ENCODE measurements at regions of chr4 and their contacts with region 1.

Region 1: GRCh38 chr4:173505924-173506518 is 24.0 kb downstream of the HAND2 start:
- DNase-seq: peak in 1 of 5 donors; percentile 42
- H3K4me3 ChIP-seq: no peak overlapping the region
- H3K4me3 Mint-ChIP-seq: peak overlapping the region in 2 of 8 donors; percentile 8 to 58
- H3K27ac ChIP-seq: no peak overlapping the region
- H3K27ac Mint-ChIP-seq: no peak overlapping the region
- H3K4me1 ChIP-seq: peaks cover 32% of the 10 kb centered on the region
- H3K4me1 Mint-ChIP-seq: peaks cover 4 to 34% (median 23%) of the 10 kb centered on the region in 4 donors
- H3K27me3 ChIP-seq: peaks cover 49% of the 10 kb centered on the region
- H3K27me3 Mint-ChIP-seq: peaks cover 63 to 80% of the 10 kb centered on the region in 2 donors

Region 2: DNA sequence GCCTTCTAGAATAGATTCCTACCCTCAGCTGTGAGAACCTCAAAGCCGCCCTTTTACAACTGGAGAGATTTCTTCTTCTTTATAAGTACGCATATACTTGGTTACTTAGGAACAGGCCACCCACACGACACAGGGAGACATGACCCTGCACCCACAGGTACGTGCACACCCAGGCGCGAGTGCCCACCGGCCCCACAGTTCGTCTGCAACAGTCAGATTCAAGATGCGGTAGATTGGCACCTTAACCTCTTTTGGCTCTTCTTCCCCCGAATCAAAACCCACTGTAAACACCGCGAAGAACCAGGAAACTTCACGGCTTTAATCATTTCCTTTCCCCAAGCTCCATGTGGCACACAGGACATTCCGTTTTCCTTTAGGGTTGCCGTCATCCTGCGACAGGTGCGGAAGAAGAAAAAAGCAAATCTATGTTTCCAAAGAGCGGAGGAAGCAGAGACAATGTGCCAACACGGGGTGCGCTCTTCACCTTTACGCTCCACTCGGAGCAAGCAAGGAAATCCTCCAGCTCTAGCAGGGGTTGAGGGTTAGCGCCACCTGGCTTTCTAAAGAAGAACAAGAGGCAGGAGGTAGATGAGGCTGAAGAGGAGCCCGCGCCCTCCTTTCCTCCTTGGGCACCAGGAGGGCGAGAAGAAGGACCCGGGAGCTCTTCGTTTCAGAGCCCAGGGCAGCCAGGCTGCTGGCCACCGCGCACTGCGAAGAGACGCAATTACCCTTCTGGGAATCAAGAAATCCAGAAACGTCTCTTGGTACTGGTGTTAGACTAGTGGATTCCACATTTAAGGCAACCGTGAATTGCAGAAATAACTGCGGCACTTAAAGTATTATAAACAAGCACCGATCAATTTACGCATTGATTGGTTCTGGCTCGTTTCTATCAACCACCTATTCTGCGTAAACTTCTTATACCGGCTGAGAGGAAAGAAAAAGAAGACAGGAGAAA is 11.7 kb before region 1 on chr4:
- CTCF ChIA-PET with region 1: interaction called, 10 read pairs
- POLR2A ChIA-PET with region 1: no interaction called
- intact Hi-C with region 1: no loop called
- DNase-seq: peak; percentile 60 to 71 (median 66)
- H3K4me3 ChIP-seq: peak overlapping the region; percentile 46 to 54
- H3K4me3 Mint-ChIP-seq: peak overlapping the region; percentile 85 to 94 (median 88)
- H3K27ac ChIP-seq: no peak overlapping the region
- H3K27ac Mint-ChIP-seq: peak overlapping the region in 3 of 7 donors; percentile 19 to 66 (median 32)
- H3K4me1 ChIP-seq: peaks cover 11% of the 10 kb centered on the region
- H3K4me1 Mint-ChIP-seq: peaks cover 11 to 28% (median 18%) of the 10 kb centered on the region in 4 donors
- H3K27me3 ChIP-seq: no peaks in the 10 kb centered on the region
- H3K27me3 Mint-ChIP-seq: peaks cover 15 to 19% of the 10 kb centered on the region in 2 donors

Region 3: DNA sequence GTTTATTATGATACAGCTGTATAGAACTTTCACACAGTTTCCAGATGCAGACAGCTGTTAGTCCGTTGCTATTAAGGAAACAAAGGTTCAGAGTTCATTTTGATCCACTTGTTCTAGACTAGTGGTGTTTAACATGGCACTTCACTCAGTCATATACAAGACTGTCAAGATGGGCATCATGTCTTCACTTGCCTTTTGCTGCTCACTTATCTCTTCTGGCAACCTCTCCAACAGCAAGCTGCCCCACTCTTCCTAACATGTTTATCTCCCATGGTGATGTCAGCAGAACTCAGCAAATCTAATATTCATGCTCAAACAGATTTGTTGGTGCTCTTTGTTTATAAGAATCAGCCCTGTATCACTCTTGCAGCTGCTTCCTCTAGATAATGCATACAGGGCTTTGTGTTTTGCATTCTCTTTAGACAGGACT is 260.2 kb after region 1 on chr4:
- CTCF ChIA-PET with region 1: no interaction called
- POLR2A ChIA-PET with region 1: no interaction called
- intact Hi-C with region 1: no loop called
- DNase-seq: no peak
- H3K4me3 ChIP-seq: no peak overlapping the region
- H3K4me3 Mint-ChIP-seq: no peak overlapping the region
- H3K27ac ChIP-seq: no peak overlapping the region
- H3K27ac Mint-ChIP-seq: no peak overlapping the region
- H3K4me1 ChIP-seq: no peaks in the 10 kb centered on the region
- H3K4me1 Mint-ChIP-seq: no peaks in the 10 kb centered on the region
- H3K27me3 ChIP-seq: no peaks in the 10 kb centered on the region
- H3K27me3 Mint-ChIP-seq: no peaks in the 10 kb centered on the region

Region 4: DNA sequence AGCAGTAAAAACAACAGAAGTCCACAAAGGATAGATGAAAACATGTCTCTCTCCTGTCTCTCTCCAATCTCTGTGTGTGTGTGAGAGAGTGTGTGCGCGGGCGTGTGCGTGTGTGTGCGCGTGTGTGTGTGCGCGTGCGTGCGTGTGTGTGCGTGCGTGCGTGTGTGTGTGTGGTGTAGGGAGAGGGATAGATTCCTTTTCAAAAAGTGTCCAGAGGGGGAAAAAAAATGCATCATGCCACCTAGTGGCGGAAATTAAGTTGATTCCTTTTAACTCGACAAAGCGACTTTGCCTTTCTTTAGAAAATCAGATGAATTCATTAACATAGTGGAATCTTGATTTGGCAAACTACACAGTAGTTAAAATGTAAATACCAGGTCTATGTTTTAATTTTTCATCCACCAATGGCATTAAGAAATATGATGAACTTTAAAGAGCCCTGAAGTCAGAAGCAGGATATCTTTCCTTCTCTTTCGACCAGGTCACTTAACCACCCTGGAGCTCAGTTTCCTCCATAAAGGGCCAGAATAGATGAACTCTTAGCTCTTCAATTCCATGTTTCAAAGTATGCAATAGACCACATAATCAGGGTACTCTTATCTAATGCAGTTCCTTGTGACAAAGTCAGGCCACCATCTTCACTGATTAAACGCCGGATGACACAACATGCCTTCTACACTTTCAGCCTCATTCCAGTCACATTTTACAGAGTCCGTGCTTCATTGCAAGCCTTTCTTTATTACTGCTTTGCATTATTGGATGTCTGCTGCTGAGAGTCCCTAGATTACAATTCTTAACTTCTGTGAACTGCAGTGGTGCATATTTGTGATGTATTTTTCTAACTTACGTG is 614.6 kb after region 1 on chr4:
- CTCF ChIA-PET with region 1: interaction called, 10 read pairs
- POLR2A ChIA-PET with region 1: no interaction called
- intact Hi-C with region 1: no loop called
- DNase-seq: peak in 3 of 5 donors; percentile 4 to 7 (median 6)
- H3K4me3 ChIP-seq: no peak overlapping the region
- H3K4me3 Mint-ChIP-seq: peak overlapping the region in 4 of 8 donors; percentile 27 to 42 (median 40)
- H3K27ac ChIP-seq: no peak overlapping the region
- H3K27ac Mint-ChIP-seq: peak overlapping the region in 1 of 7 donors; percentile 68
- H3K4me1 ChIP-seq: no peaks in the 10 kb centered on the region
- H3K4me1 Mint-ChIP-seq: peaks cover 0 to 6% (median 5%) of the 10 kb centered on the region in 4 donors
- H3K27me3 ChIP-seq: peaks cover 6% of the 10 kb centered on the region
- H3K27me3 Mint-ChIP-seq: peaks cover 28 to 39% of the 10 kb centered on the region in 2 donors